A673 (cell line): ENCODE measurements at regions of chr13 and their contacts with region 1.

Region 1: DNA sequence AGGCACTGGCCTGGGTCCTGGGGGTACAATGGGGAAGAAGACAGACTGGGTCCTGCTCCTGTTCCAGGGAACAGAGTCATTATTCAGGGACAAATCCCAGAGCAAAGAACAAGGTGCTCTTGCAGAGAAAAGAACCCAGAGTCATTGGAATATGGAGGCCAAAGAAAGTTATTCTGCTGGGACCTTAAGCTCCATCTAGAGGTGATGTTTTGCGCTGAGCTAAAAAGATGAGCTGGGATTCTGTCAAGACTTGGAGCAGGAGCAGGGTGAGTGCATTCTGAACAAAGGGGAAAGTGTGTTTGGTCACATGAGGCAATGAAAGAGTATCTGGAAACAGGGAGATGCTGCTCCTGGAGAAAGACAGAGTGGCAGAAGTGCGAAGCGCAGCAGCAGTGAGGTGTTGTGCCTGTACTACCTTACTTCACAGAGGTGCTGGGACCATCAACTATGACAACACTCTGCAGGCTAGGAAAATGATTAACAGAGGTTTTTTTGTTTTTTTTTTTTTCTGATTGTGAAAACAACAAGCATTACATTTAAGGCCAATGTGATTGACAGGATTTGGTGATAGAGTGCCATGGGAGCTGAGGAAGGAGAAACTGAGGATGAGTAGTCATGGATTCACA is 95.3 kb upstream of the TNFSF11 start:
- DNase-seq: peak; percentile 18
- H3K4me3 ChIP-seq: no peak overlapping the region
- H3K27ac ChIP-seq: no peak overlapping the region
- H3K4me1 ChIP-seq: no peaks in the 10 kb centered on the region
- H3K27me3 ChIP-seq: no peaks in the 10 kb centered on the region
- CTCF ChIP-seq: peak; percentile 54

Region 2: GRCh38 chr13:42333613-42334328 is 144.9 kb before region 1 on chr13:
- CTCF ChIA-PET with region 1: interaction called, 3 read pairs
- POLR2A ChIA-PET with region 1: no interaction called
- intact Hi-C with region 1: loop called (anchors 10 kb)
- DNase-seq: peak; percentile 38
- H3K4me3 ChIP-seq: no peak overlapping the region
- H3K27ac ChIP-seq: no peak overlapping the region
- H3K4me1 ChIP-seq: no peaks in the 10 kb centered on the region
- H3K27me3 ChIP-seq: no peaks in the 10 kb centered on the region
- CTCF ChIP-seq: peak; percentile 55

Region 3: DNA sequence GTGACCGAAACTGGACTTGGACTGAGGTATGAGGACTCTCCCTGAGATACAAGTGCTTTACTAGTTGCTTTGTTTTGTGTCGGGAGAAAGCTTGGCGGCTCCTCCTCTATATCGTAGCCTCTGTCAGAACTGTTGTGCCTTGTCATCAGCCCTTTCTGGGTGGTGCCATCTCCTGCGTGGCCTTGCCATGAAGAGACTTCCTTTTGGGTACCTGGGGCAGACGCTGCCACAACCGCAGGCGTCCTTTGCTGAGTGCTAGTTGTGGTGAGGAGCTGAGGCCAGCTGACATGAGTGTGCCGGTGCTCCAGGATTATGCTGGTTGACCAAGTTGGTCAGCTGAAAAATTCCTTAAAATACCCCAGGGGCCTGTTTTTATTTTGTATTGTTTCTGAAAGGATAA is 82.1 kb before region 1 on chr13:
- CTCF ChIA-PET with region 1: no interaction called
- POLR2A ChIA-PET with region 1: no interaction called
- intact Hi-C with region 1: no loop called
- DNase-seq: no peak
- H3K4me3 ChIP-seq: no peak overlapping the region
- H3K27ac ChIP-seq: no peak overlapping the region
- H3K4me1 ChIP-seq: no peaks in the 10 kb centered on the region
- H3K27me3 ChIP-seq: no peaks in the 10 kb centered on the region
- CTCF ChIP-seq: no peak

Region 4: GRCh38 chr13:42495251-42495650 is 16.6 kb after region 1 on chr13:
- CTCF ChIA-PET with region 1: no interaction called
- POLR2A ChIA-PET with region 1: no interaction called
- intact Hi-C with region 1: no loop called
- DNase-seq: no peak
- H3K4me3 ChIP-seq: no peak overlapping the region
- H3K27ac ChIP-seq: no peak overlapping the region
- H3K4me1 ChIP-seq: no peaks in the 10 kb centered on the region
- H3K27me3 ChIP-seq: no peaks in the 10 kb centered on the region
- CTCF ChIP-seq: no peak

Region 5: DNA sequence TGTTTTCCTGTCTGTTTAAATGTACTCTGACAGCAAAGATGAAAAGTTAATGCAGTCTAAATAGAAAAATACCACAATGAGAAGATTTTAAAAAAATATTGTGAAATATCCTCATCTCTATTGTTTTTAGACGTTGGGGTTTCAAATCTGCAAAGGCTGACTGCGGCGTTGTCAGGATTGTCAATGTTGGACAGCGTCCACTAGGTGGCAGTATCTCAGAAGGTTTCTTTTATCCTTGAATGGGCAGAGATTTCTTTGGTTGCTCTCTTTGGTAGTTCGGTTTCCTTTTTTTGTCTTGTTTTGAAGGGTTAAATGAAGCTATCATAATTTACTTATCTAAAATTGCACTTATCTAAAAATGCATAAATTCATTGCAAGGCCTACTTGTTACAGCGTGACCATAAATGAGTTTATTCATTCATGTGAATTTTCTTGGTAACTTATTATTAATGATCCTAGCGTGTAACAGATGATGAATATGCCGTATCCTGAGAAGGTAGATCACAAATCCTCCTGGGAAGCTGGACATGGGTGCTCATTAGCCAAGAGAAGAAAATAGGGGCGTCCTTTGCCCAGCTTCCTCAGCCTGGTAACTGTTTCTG is 116.4 kb after region 1 on chr13:
- CTCF ChIA-PET with region 1: interaction called, 10 read pairs
- POLR2A ChIA-PET with region 1: no interaction called
- intact Hi-C with region 1: no loop called
- DNase-seq: peak; percentile 77
- H3K4me3 ChIP-seq: no peak overlapping the region
- H3K27ac ChIP-seq: no peak overlapping the region
- H3K4me1 ChIP-seq: no peaks in the 10 kb centered on the region
- H3K27me3 ChIP-seq: peaks cover 30% of the 10 kb centered on the region
- CTCF ChIP-seq: peak; percentile 89

Region 6: DNA sequence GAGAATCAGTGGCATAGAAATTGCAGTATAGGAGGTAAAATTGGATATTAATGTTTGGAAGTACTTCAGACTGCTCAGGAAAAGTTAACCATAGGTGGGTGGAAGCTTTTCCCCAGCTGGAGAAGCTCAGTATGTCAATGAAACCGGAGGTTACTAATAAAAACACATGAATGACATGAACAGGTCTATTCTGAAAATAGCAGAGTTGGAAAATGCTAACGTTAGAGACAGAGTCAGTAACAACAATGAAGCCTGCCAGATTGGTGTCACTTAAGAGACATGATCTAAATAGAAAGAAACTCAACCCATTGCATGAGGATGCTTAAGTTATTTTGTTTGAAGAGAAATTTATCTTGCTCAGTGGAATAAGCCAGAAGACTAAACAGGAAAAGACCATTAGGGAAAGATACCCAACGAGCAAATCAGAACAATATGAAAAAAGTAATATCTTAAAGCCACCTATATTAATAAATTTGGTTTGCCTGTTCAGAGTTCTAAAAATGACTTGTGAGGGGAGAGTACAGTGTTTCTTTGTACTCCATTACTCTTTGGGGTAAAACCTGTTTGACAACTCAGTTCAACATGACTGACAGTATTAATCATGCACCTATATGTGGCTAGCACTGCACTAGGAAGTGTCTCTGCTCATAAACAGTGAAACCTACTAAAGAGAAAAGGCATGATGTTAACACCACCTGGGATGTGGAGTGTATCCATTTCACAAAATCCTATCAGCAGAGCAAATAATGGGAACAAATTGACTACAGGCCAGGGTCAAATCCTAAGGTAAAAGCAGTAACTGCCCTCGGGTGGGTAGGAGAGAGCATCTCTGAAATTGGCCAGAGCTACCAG is 909.5 kb after region 1 on chr13:
- CTCF ChIA-PET with region 1: no interaction called
- POLR2A ChIA-PET with region 1: no interaction called
- intact Hi-C with region 1: no loop called
- DNase-seq: no peak
- H3K4me3 ChIP-seq: no peak overlapping the region
- H3K27ac ChIP-seq: no peak overlapping the region
- H3K4me1 ChIP-seq: no peaks in the 10 kb centered on the region
- H3K27me3 ChIP-seq: no peaks in the 10 kb centered on the region
- CTCF ChIP-seq: no peak